Posterior vena cava (tissue), 2 donors: ENCODE measurements at regions of chr9 and their contacts with region 1.

Region 1: GRCh38 chr9:104345061-104345460 is 159.0 kb upstream of the OR13F1 start:
- DNase-seq: no peak

Region 2: GRCh38 chr9:102974530-102974929 is 1370.5 kb before region 1 on chr9:
- intact Hi-C with region 1: no loop called
- DNase-seq: no peak

Region 3: DNA sequence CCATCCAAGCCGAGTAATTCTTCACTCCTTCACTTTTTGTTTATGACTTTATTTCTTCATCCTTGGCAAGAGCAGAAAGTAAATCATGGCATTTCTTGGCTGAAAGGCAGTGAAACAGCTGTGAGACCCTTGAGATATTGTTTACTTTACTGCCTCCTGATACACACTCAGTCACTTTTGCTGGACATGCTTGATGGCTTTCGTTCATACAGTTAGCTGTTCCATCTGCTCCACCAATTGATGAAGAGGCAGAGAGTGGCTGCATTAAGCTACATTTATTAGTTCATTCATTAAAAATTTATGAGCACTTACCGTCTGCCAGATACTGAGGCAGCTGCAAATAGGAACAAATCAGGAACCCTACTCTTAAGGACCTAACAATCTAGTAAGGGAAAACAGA is 25.4 kb before region 1 on chr9:
- intact Hi-C with region 1: no loop called
- DNase-seq: no peak

Region 4: GRCh38 chr9:104361207-104361606 is 16.1 kb after region 1 on chr9:
- intact Hi-C with region 1: loop called in 1 of 2 experiments (anchors 1 kb)
- DNase-seq: no peak

Region 5: GRCh38 chr9:104374711-104375110 is 29.6 kb after region 1 on chr9:
- intact Hi-C with region 1: no loop called
- DNase-seq: no peak